HepG2 (cell line): ENCODE measurements at regions of chr12 and their contacts with region 1.

Region 1: DNA sequence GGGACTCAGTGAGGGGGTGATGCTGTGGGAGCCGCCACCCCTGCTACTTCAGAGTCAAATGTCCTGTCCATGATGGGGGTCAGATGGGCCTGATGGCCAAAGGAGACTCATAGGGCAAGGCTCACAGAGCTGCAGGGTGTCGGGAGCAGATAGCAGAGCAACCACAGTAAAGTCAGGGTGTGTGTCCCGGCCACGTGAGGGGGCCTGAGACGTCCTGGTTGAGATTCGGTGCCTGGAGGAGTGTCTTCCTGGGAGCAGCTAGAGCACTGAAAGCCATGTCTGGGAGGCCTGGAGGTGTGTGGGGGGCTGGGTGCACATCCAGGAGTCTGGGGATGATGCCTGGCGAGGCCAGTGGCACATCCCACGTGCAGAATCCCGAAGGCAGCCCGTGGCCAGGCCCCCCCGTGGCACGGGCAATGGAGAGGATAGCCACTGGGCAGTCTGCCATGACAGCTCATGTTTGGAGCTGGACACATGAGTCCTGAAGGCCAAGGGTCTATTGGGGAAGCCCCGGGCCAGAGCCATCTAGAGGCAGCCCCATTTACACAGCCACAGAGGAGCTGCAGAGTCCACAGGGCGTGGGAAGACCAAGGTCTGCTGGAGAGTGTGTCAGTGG is 308.0 kb upstream of the SFSWAP start:
- DNase-seq: no peak
- ATAC-seq: no peak
- H3K4me3 ChIP-seq: no peak overlapping the region
- H3K27ac ChIP-seq: no peak overlapping the region
- H3K4me1 ChIP-seq: no peaks in the 10 kb centered on the region
- H3K27me3 ChIP-seq: no peaks in the 10 kb centered on the region; a peak in 1 of 5 replicates
- CTCF ChIP-seq: no peak
- EP300 ChIP-seq: no peak
- POLR2A ChIP-seq: no peak
- RAD21 ChIP-seq: no peak

Region 2: GRCh38 chr12:131264625-131265024 is 138.3 kb before region 1 on chr12:
- CTCF ChIA-PET with region 1: no interaction called
- POLR2A ChIA-PET with region 1: no interaction called
- in situ Hi-C with region 1: loop called (anchors 5 kb)
- intact Hi-C with region 1: loop called (anchors 5 kb)
- DNase-seq: no peak
- ATAC-seq: no peak
- H3K4me3 ChIP-seq: no peak overlapping the region
- H3K27ac ChIP-seq: no peak overlapping the region
- H3K4me1 ChIP-seq: no peaks in the 10 kb centered on the region
- H3K27me3 ChIP-seq: peaks cover 5 to 33% of the 10 kb centered on the region in 2 experiments
- CTCF ChIP-seq: no peak
- EP300 ChIP-seq: no peak
- POLR2A ChIP-seq: no peak
- RAD21 ChIP-seq: no peak

Region 3: DNA sequence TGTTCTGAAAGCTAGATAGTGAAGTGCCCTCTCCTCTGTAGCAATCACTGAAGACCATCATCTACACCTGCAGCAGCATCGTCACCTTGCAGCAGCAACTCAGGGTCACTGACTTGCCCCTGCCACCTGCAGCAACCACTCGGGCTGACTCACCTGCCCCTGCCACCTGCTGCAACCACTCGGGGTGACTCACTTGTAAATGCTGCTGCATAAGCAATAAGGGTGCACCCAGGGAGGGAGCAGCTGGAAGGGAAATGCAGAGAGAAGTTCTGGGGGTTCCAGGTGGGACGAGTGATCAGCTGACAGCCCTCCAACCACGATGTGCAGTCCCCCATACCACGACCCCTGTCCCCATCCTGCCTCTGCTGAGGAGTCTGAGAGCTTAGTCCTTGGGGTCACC is 49.1 kb before region 1 on chr12:
- CTCF ChIA-PET with region 1: no interaction called
- POLR2A ChIA-PET with region 1: no interaction called
- in situ Hi-C with region 1: no loop called
- intact Hi-C with region 1: no loop called
- DNase-seq: no peak
- ATAC-seq: no peak
- H3K4me3 ChIP-seq: no peak overlapping the region
- H3K27ac ChIP-seq: no peak overlapping the region
- H3K4me1 ChIP-seq: no peaks in the 10 kb centered on the region
- H3K27me3 ChIP-seq: peaks cover 3 to 39% of the 10 kb centered on the region in 2 experiments; a peak in 4 of 5 replicates
- CTCF ChIP-seq: no peak
- EP300 ChIP-seq: no peak
- POLR2A ChIP-seq: no peak
- RAD21 ChIP-seq: no peak

Region 4: DNA sequence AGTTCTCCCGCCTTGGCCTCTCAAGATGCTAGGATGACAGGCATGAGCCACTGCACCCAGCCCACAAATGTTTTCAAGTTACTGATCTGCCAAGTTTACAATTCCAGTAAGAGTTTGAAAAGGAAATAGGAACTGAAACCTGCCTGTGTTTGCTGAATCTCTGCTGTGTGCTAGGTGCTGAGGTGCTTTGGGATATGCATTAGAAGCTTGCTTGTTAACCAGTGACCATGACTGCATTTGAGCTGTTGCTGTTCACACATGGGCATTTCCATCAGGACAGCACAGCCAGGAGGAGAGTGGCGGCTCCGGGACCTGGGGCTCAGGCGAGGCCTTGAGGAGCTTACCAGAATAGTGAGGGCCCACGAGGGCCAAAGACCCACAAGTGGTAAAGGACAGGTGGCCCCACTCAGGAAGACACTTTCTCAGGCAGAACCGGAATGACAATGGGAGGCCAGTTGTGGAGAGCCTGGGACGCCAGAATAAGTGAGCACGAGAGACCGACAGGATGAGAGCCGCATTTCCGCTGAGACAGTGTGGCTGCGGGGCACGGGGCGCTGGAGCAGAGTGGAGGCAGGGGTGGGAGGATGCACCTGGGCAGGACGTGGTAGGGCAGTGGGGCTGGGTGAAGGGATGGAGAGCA is 370.8 kb after region 1 on chr12:
- CTCF ChIA-PET with region 1: no interaction called
- POLR2A ChIA-PET with region 1: no interaction called
- in situ Hi-C with region 1: no loop called
- intact Hi-C with region 1: no loop called
- DNase-seq: no peak
- ATAC-seq: no peak
- H3K4me3 ChIP-seq: no peak overlapping the region
- H3K27ac ChIP-seq: no peak overlapping the region
- H3K4me1 ChIP-seq: no peaks in the 10 kb centered on the region
- H3K27me3 ChIP-seq: no peaks in the 10 kb centered on the region
- CTCF ChIP-seq: no peak
- EP300 ChIP-seq: no peak
- POLR2A ChIP-seq: no peak
- RAD21 ChIP-seq: no peak